Left colon (tissue), 2 donors: ENCODE measurements at regions of chr9 and their contacts with region 1.

Region 1: GRCh38 chr9:110058304-110058953 is 149.5 kb downstream of the C9orf152 start:
- DNase-seq: peak; percentile 41 to 67
- ATAC-seq: peak; percentile 99

Region 2: DNA sequence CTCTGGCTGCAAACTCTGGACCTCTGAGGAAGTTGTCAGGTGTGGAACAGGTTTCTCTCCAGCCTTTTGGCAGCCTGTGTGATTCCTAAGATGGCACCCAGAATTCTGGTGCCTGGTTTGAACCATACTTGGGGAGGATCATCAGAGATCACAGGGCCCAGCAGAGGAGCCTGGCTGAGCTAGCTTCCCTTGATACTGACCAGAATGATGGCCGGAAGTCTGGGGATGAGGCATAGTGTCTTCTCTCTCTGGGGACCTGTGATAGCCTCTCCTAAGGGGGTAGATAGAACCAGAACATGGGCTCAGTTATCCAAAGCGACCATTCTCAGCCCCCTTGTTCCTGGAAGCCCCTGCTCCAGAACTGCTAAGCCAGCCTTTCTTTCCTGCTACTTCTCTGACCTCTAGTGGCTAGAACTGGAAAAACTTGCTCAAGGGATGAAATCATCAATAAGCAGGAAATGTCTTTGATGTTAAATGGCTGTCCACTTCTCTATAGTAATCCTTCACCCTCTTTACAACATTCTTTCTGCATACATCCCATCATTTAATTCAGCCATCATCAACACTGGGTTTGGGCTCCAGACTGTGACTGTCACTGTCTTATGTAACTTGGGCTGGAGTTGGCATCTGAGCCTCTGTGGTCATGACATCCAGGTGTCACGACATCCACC is 94.4 kb after region 1 on chr9:
- intact Hi-C with region 1: loop called in 1 of 2 experiments (anchors 10 kb)
- DNase-seq: no peak
- ATAC-seq: peak; percentile 73